GM13977 (cell line): ENCODE measurements at regions of chr6 and their contacts with region 1.

Region 1: DNA sequence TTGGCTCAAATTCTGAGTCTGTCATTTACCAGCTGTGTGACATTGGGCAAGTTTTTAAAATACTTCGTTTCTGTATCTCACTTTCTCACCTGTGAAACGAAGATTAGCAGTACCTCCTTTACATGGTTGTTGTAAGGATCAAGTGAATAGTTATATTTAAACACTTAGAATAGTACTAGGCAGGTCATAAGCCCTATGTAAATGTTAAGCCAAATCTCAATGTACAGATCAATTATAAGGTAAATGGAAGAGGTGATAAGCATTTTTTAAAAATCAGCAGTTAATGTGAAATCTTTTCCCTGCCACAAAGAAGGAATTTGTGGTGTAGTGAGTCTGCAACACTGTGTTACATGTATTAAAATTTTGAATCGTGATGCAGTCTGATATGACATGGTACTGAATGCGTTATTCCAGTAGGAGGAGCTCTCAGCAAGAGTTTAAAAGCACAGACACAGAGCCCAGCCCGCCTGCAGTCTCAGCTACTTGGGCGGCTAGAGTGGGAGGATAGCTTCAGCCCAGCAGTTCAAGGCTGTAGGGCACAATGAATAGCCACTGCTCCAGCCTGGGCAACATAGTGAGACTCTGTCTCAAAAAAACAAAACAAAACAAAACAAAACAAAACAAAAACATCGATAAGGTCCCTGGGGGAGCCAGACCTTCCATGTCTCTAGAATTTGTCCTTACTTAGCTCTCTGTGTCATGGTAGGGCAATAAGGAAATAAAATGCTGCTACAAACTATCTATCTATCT is 46.0 kb downstream of the GTF2H5 start:
- DNase-seq: peak; percentile 77
- CTCF ChIP-seq: peak; percentile 82

Region 2: GRCh38 chr6:157830354-157831017 is 383.6 kb before region 1 on chr6:
- in situ Hi-C with region 1: no loop called
- DNase-seq: peak; percentile 53
- CTCF ChIP-seq: peak; percentile 4

Region 3: DNA sequence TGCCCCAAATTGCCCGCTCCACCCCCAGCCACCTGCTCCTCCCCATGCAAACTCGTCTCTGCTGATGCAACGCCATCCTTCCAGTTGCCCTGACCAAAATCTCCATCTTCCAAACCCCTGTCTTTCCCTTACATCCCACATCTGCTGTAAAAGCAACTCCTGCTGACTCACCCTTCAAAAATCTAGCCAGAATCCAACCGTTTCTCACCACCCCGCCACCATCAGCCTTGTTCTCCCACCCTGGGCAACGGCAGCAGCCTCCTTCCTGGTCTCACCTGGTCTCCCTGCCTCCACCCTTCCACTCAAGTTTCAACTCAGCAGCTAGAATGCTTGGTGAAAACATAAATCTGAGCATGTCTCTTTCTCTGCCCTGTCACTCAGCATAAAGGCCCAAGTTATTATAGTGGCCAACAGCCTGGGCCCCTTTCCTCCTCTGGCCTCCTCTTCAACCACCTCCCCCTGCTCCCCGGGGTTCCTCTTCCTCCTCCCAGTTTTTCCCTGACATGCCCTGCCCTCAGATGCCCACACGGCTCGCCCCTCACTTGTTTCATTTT is 239.7 kb before region 1 on chr6:
- in situ Hi-C with region 1: no loop called
- DNase-seq: no peak
- CTCF ChIP-seq: no peak

Region 4: DNA sequence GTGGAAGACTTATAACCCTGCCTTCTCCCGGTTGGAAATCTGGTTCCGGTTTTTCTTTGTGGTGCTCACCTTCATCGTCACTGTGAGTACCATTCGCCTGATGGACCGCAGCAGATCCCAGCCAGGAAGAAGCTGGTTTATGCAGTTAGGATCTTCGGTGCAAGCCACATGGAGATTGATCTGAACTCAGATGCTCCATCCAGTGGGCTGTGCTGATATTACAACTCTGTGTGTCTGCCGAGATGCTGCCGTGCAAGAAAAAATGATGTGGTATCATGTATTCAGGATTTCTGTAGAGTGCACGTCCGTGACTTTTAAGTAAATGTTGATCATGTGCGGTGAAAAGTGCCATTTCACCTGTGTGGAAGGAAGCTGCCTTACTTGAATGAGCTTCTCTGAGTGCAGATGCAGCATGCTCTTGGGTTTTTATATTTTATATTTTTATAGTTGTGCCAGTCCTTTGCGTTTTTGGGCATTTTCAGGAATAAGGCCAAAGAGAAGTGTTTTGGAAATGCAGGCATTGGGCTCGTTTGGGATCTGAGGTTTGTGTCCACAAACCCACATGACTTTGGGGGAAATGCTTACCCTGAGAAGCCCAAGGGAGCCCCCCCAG is 391.3 kb after region 1 on chr6:
- in situ Hi-C with region 1: loop called (anchors 10 kb)
- DNase-seq: peak; percentile 79
- CTCF ChIP-seq: peak; percentile 80

Region 5: DNA sequence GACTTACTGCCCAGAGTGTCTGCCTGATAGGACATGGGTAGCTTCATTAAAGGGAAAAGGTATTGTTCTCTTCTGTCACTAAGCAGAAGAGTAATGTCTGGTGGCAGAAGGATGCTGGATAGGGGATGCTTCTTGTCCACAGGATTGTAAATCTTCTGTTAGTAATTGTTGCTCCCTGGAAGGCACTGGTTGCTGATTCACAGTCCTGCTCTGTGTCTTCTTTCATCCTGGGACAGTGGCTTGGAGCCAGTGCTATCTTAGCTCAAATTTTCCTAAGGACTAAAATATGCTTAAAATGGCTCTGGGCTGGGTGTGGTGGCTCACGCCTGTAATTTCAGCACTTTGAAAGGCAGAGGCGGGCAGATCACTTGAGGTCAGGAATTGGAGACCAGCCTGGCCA is 483.7 kb after region 1 on chr6:
- in situ Hi-C with region 1: loop called (anchors 10 kb)
- DNase-seq: no peak
- CTCF ChIP-seq: no peak

Region 6: GRCh38 chr6:158999666-159000403 is 785.7 kb after region 1 on chr6 and contains the start of gene RSPH3:
- in situ Hi-C with region 1: loop called (anchors 25 kb)
- DNase-seq: peak; percentile 94
- CTCF ChIP-seq: peak; percentile 6